ENCODE measurements at regions of chr4 and their contacts with region 1.

Region 1: GRCh38 chr4:78638337-78639172 is 87.0 kb downstream of the ANXA3 start:
- DNase-seq: no peak
- H3K4me3 ChIP-seq: no peak overlapping the region
- H3K27ac ChIP-seq: no peak overlapping the region
- H3K4me1 ChIP-seq: no peaks in the 10 kb centered on the region
- H3K27me3 ChIP-seq: no peaks in the 10 kb centered on the region
- CTCF ChIP-seq: no peak
- POLR2A ChIP-seq: no peak

Region 2: GRCh38 chr4:78864405-78865024 is 226.0 kb after region 1 on chr4:
- intact Hi-C with region 1: loop called (anchors 10 kb)
- DNase-seq: peak in 1 of 2 donors; percentile 20
- H3K4me3 ChIP-seq: no peak overlapping the region
- H3K27ac ChIP-seq: no peak overlapping the region
- H3K4me1 ChIP-seq: no peaks in the 10 kb centered on the region
- H3K27me3 ChIP-seq: no peaks in the 10 kb centered on the region
- CTCF ChIP-seq: peak; percentile 63 to 78 (median 74)
- POLR2A ChIP-seq: no peak